Tibial artery (tissue), 4 donors: ENCODE measurements at regions of chr22 and their contacts with region 1.

Region 1: GRCh38 chr22:49930739-49931412 is 12.4 kb downstream of the CRELD2 start:
- DNase-seq: peak; percentile 80 to 87
- H3K4me3 ChIP-seq: no peak overlapping the region
- H3K27ac ChIP-seq: no peak overlapping the region
- H3K4me1 ChIP-seq: peaks cover 5 to 51% (median 37%) of the 10 kb centered on the region in 4 donors
- H3K27me3 ChIP-seq: peaks cover 0 to 12% of the 10 kb centered on the region in 2 donors
- CTCF ChIP-seq: peak; percentile 58 to 65

Region 2: GRCh38 chr22:49616356-49617231 is 314.3 kb before region 1 on chr22:
- intact Hi-C with region 1: no loop called
- DNase-seq: peak; percentile 9 to 56
- H3K4me3 ChIP-seq: no peak overlapping the region
- H3K27ac ChIP-seq: no peak overlapping the region
- H3K4me1 ChIP-seq: no peaks in the 10 kb centered on the region
- H3K27me3 ChIP-seq: peaks cover 0 to 22% of the 10 kb centered on the region in 2 donors
- CTCF ChIP-seq: no peak

Region 3: DNA sequence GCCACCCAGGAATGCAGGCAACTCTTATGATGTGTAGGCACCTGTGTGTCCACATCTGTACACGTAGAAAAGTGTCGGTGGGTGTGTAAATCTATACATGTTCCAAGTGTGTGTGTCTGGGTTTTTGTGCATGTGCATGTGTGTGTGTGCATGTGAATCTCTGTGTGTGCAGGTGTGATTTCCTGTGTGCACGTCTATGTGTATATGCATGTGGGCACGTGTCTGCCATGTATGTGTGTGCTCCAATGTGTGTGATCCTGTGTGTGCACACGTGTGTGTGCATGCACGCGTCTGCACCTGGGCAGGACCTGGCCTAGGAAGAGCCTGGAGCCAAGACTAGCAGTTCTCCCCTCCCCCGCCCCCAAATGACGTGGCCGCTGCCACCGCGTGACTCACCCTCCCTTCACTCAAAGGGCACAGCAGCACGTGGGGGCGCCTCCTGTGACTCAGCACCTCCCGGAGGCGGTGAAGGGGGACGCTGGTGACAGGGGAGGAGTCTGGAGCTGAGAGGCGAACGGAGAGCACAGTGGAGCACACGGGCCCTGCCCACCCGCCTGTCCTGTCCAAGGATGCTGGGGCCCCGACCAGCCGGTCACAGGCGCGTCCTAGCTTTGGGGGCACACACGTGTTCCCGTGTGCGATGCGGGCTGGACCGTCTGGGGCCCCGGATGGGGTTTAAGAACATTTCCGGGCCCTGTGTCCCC is 39.8 kb after region 1 on chr22:
- intact Hi-C with region 1: loop called (anchors 5 kb)
- DNase-seq: peak; percentile 97 to 99
- H3K4me3 ChIP-seq: peak overlapping the region; percentile 57 to 71
- H3K27ac ChIP-seq: peak overlapping the region; percentile 88 to 89
- H3K4me1 ChIP-seq: peaks cover 7 to 49% (median 35%) of the 10 kb centered on the region in 4 donors
- H3K27me3 ChIP-seq: no peaks in the 10 kb centered on the region
- CTCF ChIP-seq: peak in 1 of 2 experiments; percentile 13

Region 4: GRCh38 chr22:50030297-50031188 is 99.7 kb after region 1 on chr22:
- intact Hi-C with region 1: loop called (anchors 1 kb)
- DNase-seq: peak; percentile 64 to 78
- H3K4me3 ChIP-seq: no peak overlapping the region
- H3K27ac ChIP-seq: no peak overlapping the region
- H3K4me1 ChIP-seq: peaks cover 0 to 9% (median 4%) of the 10 kb centered on the region in 4 donors
- H3K27me3 ChIP-seq: peaks cover 0 to 72% of the 10 kb centered on the region in 2 donors
- CTCF ChIP-seq: peak; percentile 88 to 89

Region 5: DNA sequence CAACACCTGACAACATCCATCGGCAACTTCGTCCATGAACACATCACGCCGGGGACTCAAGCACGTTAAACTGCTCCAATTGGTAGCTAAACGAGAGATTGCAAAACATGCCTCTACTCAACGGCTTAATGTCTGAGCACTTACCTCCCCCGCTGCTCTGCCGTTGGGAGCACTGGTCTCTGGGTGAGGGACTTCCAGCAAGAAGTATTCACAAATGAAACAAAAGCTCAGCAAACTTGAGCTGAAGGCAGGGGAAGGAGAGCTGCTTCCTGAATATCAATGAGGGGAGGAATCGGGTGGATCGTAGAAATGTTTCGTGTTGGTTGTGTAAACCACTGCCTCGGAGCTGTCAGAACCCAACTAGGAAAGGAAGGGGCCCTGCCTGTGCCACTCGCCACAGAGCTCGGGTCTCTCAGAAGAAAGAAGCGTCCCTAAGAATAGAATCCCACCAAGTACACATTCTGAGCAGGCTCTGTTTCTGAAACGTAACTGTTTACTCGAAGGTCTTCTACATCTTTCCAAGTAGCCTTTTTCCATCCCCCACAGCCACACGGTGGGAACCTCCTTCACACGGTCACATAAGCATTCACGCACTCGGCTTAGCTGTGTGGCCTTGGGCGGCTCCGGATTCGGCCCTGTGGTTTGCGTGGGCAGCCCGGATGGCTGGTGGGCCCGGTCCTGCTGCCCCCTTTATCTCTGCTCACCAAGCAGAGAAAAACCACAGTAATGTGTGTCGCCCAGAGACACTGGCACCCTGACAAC is 154.5 kb after region 1 on chr22 and contains the start of gene MLC1:
- intact Hi-C with region 1: no loop called
- DNase-seq: no peak
- H3K4me3 ChIP-seq: no peak within 1 kb of the TSS
- H3K27ac ChIP-seq: no peak within 1 kb of the TSS
- H3K4me1 ChIP-seq: peaks cover 0 to 3% (median 0%) of the 10 kb centered on the region in 4 donors
- H3K27me3 ChIP-seq: peaks cover 0 to 63% of the 10 kb centered on the region in 2 donors
- CTCF ChIP-seq: no peak

Region 6: GRCh38 chr22:50209893-50210292 is 279.0 kb after region 1 on chr22:
- intact Hi-C with region 1: loop called (anchors 5 kb)
- DNase-seq: peak in 1 of 2 donors; percentile 61
- H3K4me3 ChIP-seq: no peak overlapping the region
- H3K27ac ChIP-seq: no peak overlapping the region
- H3K4me1 ChIP-seq: peaks cover 0 to 7% (median 5%) of the 10 kb centered on the region in 4 donors
- H3K27me3 ChIP-seq: no peaks in the 10 kb centered on the region
- CTCF ChIP-seq: peak; percentile 74 to 84